GM12878 (cell line): ENCODE measurements at regions of chr9 and their contacts with region 1.

Region 1: GRCh38 chr9:111916234-111916645 is 19.6 kb downstream of the UGCG start:
- DNase-seq: no peak
- ATAC-seq: peak; percentile 67
- H3K4me3 ChIP-seq: peak overlapping the region; percentile 54; the same call in 1 of the 2 replicates
- H3K27ac ChIP-seq: peak overlapping the region; percentile 76
- H3K4me1 ChIP-seq: peaks cover 47% of the 10 kb centered on the region
- H3K27me3 ChIP-seq: no peaks in the 10 kb centered on the region
- CTCF ChIP-seq: no peak
- EP300 ChIP-seq: peak; percentile 42 to 60; a peak in 3 of 4 replicates
- POLR2A ChIP-seq: no peak
- RAD21 ChIP-seq: no peak

Region 2: DNA sequence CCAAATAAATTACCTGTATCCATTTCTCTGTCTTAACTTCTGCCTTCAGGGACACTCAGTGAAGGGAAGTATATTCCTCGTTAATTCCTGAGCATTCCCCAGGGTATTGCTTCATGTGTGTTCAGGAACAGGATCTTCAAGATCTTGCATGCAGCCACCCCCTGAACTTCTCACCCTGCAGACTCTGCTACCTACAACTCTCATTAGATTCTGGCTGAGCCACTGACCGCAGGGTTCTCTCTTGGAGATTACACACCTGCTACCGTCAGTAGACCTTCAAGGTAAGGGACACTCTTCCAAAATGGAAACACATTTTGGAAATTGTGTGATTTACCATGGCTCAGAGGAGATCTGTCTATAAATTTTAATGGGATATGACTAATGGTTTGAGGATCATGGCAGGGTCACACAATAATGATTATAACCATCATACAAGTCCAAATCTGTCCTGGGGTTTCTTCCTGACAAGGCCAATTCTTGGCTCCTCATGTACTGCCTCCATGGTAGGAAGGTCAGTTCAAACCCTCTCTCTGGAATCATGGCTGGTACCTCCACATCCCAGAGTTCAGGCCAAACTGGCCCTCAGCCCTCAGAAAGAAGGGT is 58.5 kb before region 1 on chr9:
- CTCF ChIA-PET with region 1: no interaction called
- POLR2A ChIA-PET with region 1: no interaction called
- RAD21 ChIA-PET with region 1: no interaction called
- SMC1A ChIA-PET with region 1: no interaction called
- in situ Hi-C with region 1: no loop called
- intact Hi-C with region 1: no loop called
- DNase-seq: no peak
- ATAC-seq: no peak
- H3K4me3 ChIP-seq: no peak overlapping the region
- H3K27ac ChIP-seq: no peak overlapping the region
- H3K4me1 ChIP-seq: no peaks in the 10 kb centered on the region
- H3K27me3 ChIP-seq: no peaks in the 10 kb centered on the region
- CTCF ChIP-seq: no peak
- EP300 ChIP-seq: no peak
- POLR2A ChIP-seq: no peak
- RAD21 ChIP-seq: no peak

Region 3: DNA sequence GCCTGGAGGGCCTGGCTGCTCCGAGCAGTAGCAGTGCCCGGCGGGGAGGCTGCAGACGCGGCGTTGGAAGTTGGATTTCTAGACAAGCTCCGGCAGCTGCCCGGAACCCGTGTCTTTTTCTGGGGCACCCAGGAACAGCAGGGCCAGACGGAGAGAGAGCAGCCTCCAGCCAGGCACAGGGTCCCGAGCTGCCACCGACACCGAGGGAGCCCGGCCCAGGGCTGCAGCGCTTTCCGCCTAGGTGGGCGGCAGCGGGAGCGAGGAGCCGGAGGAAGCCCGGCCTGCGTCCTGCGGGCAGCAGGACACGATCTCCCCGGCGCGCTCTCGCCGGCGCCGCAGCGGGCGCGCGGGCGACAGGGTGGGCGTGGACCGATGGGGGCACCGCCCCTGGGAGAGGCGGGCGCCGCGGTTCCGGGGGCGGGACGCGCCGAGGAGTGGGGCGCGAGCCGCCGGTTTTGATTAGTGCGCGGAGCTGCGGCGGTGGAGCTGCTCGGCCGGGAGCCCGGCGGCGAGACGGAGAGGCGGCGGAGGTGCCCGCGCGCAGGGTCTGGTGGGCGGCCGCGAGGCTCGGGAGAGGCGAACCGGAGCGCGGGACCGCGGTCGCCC is 19.8 kb before region 1 on chr9 and contains the start of gene UGCG:
- CTCF ChIA-PET with region 1: interaction called, 4 read pairs
- POLR2A ChIA-PET with region 1: interaction called, 45 read pairs
- RAD21 ChIA-PET with region 1: interaction called, 27 read pairs
- SMC1A ChIA-PET with region 1: interaction called, 65 read pairs
- in situ Hi-C with region 1: no loop called
- intact Hi-C with region 1: no loop called
- DNase-seq: no peak
- ATAC-seq: peak; percentile 79
- H3K4me3 ChIP-seq: peak within 1 kb of the TSS; percentile 80
- H3K27ac ChIP-seq: peak within 1 kb of the TSS; percentile 93
- H3K4me1 ChIP-seq: no peaks in the 10 kb centered on the region; the same call in 1 of the 2 replicates
- H3K27me3 ChIP-seq: no peaks in the 10 kb centered on the region
- CTCF ChIP-seq: no peak
- EP300 ChIP-seq: 0 out of 4 replicates have a peak, but pooled peaks of 1 of the 2 experiments have one; percentile 14
- POLR2A ChIP-seq: peak; percentile 93
- RAD21 ChIP-seq: 0 out of 2 replicates have a peak, but pooled peaks have one; percentile 2
- polyA plus RNA-seq, gene UGCG: 48.0 to 62.1 TPM

Region 4: GRCh38 chr9:111902396-111903147 is 13.7 kb before region 1 on chr9:
- CTCF ChIA-PET with region 1: interaction called, 6 read pairs
- POLR2A ChIA-PET with region 1: interaction called, 45 read pairs
- RAD21 ChIA-PET with region 1: interaction called, 27 read pairs
- SMC1A ChIA-PET with region 1: interaction called, 65 read pairs
- in situ Hi-C with region 1: no loop called
- intact Hi-C with region 1: no loop called
- DNase-seq: no peak
- ATAC-seq: no peak
- H3K4me3 ChIP-seq: peak overlapping the region; percentile 80; the same call in 1 of the 2 replicates
- H3K27ac ChIP-seq: peak overlapping the region; percentile 37; the same call in 1 of the 2 replicates
- H3K4me1 ChIP-seq: peaks cover 26% of the 10 kb centered on the region
- H3K27me3 ChIP-seq: no peaks in the 10 kb centered on the region
- CTCF ChIP-seq: no peak
- EP300 ChIP-seq: no peak
- POLR2A ChIP-seq: no peak
- RAD21 ChIP-seq: no peak

Region 5: DNA sequence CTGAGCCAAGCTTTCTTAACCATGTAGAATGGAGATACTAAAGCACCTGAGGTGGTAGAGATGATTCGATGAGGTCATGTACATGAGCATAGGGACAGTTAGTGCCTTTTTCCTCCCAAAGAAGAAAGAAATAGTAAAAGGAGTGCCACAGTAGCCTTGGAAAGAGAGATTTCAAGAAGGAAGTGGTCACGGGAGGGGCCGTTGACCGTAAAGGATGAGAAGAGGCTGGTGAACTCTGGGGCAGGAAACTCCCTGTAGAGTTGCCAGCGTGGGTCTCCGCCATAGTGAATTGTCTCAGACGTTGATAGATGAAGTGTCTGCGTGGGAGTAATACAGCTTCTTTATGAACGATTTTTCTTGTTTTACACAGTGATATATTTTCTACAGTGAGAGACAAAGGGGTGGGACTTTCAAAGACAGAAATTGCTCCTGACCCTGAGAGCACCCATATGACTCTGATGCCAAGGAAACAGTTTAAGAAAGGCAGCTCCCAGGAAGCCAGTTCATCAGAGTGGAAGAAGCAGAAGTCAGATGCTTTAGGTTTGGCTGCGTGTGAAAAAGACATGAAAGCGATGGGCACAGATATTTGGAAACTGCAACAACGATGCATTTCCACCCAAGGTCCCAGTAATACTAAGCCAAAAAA is 21.7 kb after region 1 on chr9:
- CTCF ChIA-PET with region 1: interaction called, 7 read pairs
- POLR2A ChIA-PET with region 1: interaction called, 24 read pairs
- RAD21 ChIA-PET with region 1: interaction called, 21 read pairs
- SMC1A ChIA-PET with region 1: interaction called, 51 read pairs
- in situ Hi-C with region 1: no loop called
- intact Hi-C with region 1: no loop called
- DNase-seq: peak; percentile 74
- ATAC-seq: peak; percentile 90
- H3K4me3 ChIP-seq: no peak overlapping the region
- H3K27ac ChIP-seq: peak overlapping the region; percentile 80
- H3K4me1 ChIP-seq: peaks cover 21% of the 10 kb centered on the region
- H3K27me3 ChIP-seq: no peaks in the 10 kb centered on the region
- CTCF ChIP-seq: no peak
- EP300 ChIP-seq: peak; percentile 68 to 77; a peak in 2 of 4 replicates
- POLR2A ChIP-seq: no peak; the same call in none of the 2 replicates
- RAD21 ChIP-seq: no peak

Region 6: DNA sequence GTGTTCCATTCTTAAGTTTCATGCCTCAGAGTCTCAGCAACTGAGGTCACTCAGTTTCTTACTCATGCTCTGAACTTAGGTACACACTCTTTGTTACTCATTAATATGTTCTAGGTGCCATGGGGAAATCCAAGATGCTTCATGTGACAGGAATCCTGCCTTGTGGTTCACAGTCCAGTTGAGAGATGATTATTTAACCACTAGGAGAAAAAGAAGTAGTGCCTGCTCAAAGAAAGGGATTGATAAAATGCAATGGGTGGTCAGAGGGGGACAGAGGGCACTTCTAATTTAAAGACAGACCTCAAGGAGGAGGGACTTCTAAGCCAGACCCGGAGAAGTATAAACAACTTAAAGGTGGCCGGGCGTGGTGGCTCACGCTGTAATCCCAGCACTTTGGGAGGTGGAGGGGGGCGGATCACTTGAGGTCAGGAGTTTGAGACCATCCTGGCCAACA is 49.4 kb after region 1 on chr9:
- CTCF ChIA-PET with region 1: interaction called, 4 read pairs
- POLR2A ChIA-PET with region 1: interaction called, 5 read pairs
- RAD21 ChIA-PET with region 1: interaction called, 50 read pairs
- SMC1A ChIA-PET with region 1: interaction called, 7 read pairs
- in situ Hi-C with region 1: no loop called
- intact Hi-C with region 1: no loop called
- DNase-seq: peak; percentile 90
- ATAC-seq: peak; percentile 80
- H3K4me3 ChIP-seq: no peak overlapping the region
- H3K27ac ChIP-seq: peak overlapping the region; percentile 56
- H3K4me1 ChIP-seq: peaks cover 25% of the 10 kb centered on the region
- H3K27me3 ChIP-seq: no peaks in the 10 kb centered on the region
- CTCF ChIP-seq: no peak
- EP300 ChIP-seq: peak; percentile 82 to 89
- POLR2A ChIP-seq: no peak
- RAD21 ChIP-seq: 0 out of 2 replicates have a peak, but pooled peaks have one; percentile 3

Region 7: DNA sequence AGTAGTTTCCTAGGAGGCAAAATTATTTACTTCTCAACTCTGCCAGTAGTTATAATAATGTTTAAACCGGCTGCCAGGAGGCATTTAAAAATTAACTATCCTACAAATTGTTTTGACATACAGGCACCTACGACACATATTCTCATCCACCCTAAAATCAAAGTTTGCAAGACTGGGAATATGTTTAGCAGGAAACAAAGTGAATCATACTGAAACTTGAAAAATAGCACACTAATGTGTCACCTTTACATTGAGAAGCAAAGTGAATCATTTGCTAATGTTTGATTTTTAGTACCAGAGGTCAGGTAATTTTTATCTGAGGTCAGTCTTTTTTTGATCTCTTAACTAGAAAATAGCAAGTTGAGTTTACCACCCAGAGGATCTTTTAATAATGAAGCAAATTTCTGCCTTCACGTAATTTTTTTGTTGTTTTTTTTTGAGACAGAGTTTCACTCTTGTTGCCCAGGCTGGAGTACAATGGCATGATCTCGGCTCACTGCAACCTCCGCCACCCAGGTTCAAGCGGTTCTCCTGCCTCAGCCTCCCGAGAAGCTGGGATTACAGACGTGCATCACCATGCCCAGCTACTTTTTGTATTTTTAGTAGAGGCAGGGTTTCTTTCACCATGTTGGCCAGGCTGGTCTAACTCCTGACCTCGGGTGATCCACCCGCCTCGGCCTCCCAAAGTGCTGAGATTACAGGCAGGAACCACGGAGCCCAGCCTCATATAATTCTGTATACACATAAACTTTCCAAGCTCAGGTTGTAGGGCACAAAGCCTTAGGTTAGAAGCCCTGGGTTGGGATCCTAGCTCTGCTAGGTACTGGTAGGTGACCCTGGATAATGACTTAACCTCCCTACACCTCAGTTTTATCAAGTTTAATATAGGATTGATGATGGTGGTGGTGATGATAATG is 104.7 kb after region 1 on chr9:
- CTCF ChIA-PET with region 1: no interaction called
- POLR2A ChIA-PET with region 1: interaction called, 3 read pairs
- RAD21 ChIA-PET with region 1: interaction called, 17 read pairs
- SMC1A ChIA-PET with region 1: no interaction called
- in situ Hi-C with region 1: no loop called
- intact Hi-C with region 1: no loop called
- DNase-seq: peak; percentile 80
- ATAC-seq: peak; percentile 68
- H3K4me3 ChIP-seq: peak overlapping the region; percentile 10; the same call in 1 of the 2 replicates
- H3K27ac ChIP-seq: peak overlapping the region; percentile 63
- H3K4me1 ChIP-seq: peaks cover 33% of the 10 kb centered on the region
- H3K27me3 ChIP-seq: no peaks in the 10 kb centered on the region
- CTCF ChIP-seq: no peak
- EP300 ChIP-seq: peak; percentile 69 to 75; a peak in 3 of 4 replicates
- POLR2A ChIP-seq: no peak
- RAD21 ChIP-seq: no peak